HEK293 (cell line): ENCODE measurements at regions of chr12 and their contacts with region 1.

Region 1: DNA sequence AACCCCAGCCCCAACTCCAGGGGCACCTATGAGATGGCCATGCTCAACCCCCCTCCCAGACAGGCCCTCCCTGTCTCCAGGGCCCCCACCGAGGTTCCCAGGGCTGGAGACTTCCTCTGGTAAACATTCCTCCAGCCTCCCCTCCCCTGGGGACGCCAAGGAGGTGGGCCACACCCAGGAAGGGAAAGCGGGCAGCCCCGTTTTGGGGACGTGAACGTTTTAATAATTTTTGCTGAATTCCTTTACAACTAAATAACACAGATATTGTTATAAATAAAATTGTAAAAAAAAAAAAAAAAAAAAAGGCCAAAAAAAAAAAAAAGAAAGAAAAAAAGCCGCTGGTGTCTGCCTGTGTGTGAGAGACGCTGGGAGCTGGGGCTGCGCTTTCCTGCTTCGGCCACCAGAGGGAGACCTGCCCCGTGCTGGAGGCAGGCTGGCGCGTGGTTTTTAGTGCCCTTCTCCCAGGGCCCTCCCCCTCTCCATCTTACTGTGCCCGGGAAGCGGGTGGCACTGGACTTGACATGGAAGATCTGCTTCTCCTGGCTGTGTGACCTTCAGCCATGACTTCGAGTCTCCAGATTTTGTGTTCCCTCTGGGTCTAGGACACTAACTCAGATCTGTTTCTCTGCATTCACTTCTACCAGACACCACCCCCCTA is 3.4 kb upstream of the NXPH4 start:
- H3K4me3 ChIP-seq: no peak overlapping the region
- H3K27ac ChIP-seq: no peak overlapping the region
- H3K4me1 ChIP-seq: peaks cover 5% of the 10 kb centered on the region
- CTCF ChIP-seq: peak; percentile 81

Region 2: GRCh38 chr12:57182921-57183790 is 30.0 kb before region 1 on chr12:
- CTCF ChIA-PET with region 1: interaction called, 10 read pairs
- POLR2A ChIA-PET with region 1: no interaction called
- H3K4me3 ChIP-seq: no peak overlapping the region
- H3K27ac ChIP-seq: no peak overlapping the region
- H3K4me1 ChIP-seq: no peaks in the 10 kb centered on the region
- CTCF ChIP-seq: peak; percentile 91

Region 3: DNA sequence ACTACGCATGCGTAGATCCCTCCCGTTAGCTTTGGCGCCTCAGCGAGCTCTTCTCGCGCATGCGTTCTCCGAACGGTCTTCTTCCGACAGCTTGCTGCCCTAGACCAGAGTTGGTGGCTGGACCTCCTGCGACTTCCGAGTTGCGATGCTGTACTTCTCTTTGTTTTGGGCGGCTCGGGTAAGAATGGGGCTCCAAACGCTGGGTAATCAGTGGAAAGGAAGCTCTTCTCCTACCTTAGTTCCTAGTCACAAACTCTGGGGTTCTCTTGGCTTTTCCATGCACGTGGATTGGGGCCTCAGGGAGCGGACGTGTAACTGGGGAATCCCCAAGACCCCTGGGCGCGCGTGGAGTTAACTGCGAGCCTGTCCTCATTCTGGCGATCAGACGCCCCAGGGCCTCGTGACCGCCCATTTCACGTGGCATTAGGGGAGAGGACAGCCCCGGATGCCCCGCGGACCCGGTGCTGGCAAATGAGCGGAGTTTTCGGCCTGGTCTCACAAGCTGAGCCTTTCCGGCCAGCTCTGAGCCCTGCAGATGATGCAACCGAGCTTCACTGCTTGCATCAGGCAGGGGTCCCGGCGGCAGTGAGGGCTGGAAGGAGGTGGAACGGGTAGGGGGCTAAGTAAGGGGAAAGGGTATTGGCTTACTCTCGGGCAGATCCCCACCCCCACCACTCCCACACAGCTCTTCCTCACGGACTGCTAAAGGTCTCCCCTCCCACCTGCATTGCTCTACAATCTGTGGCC is 16.6 kb after region 1 on chr12 and contains the start of gene SHMT2:
- CTCF ChIA-PET with region 1: interaction called, 628 read pairs
- POLR2A ChIA-PET with region 1: interaction called, 44 read pairs
- H3K4me3 ChIP-seq: peak within 1 kb of the TSS; percentile 46
- H3K27ac ChIP-seq: peak within 1 kb of the TSS; percentile 87
- H3K4me1 ChIP-seq: peaks cover 17% of the 10 kb centered on the region
- CTCF ChIP-seq: no peak

Region 4: DNA sequence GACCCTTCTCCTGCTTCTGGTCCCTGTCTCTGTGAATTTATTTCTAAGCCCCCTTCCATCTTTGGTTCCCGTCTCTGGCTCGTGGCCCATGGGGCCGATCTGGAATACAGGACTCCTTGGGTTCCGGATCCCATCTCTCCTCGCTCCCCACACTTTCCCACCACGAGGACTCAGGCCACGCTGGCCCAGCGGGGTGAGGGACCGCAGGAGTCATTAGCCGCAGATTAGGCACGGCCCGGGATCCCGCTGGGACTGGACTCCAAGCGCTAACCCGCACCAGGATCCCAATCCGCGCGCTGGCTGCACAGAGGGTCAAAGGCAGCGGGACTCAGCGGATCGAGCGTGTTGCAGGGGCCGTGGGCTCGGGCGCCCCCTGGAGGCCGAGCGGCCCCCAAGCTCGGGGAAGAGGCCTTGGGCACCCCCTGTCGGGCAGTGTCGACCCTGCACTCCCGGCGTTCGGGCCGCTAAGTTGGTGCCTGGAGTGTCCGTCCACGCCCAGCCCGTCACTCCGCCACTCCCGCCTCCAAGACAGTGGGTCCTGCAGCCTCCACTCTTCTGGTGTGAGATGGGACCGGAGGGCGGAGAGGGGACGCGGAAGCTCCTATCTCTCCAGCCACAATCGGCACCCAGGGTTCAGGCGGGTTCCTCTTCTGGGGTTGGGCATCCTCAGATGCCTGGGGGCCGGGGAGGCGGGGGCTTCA is 25.8 kb after region 1 on chr12:
- CTCF ChIA-PET with region 1: interaction called, 628 read pairs
- POLR2A ChIA-PET with region 1: interaction called, 17 read pairs
- H3K4me3 ChIP-seq: no peak overlapping the region; the same call in 1 of the 2 replicates
- H3K27ac ChIP-seq: no peak overlapping the region; the same call in 1 of the 2 replicates
- H3K4me1 ChIP-seq: peaks cover 17% of the 10 kb centered on the region
- CTCF ChIP-seq: peak; percentile 100

Region 5: GRCh38 chr12:57248934-57249742 is 36.0 kb after region 1 on chr12:
- CTCF ChIA-PET with region 1: interaction called, 628 read pairs
- POLR2A ChIA-PET with region 1: no interaction called
- H3K4me3 ChIP-seq: no peak overlapping the region
- H3K27ac ChIP-seq: no peak overlapping the region
- H3K4me1 ChIP-seq: 0 out of 2 replicates have a peak, but pooled peaks cover 4% of the 10 kb centered on the region
- CTCF ChIP-seq: no peak